ENCODE measurements at regions of chr17 and their contacts with region 1.

Region 1: DNA sequence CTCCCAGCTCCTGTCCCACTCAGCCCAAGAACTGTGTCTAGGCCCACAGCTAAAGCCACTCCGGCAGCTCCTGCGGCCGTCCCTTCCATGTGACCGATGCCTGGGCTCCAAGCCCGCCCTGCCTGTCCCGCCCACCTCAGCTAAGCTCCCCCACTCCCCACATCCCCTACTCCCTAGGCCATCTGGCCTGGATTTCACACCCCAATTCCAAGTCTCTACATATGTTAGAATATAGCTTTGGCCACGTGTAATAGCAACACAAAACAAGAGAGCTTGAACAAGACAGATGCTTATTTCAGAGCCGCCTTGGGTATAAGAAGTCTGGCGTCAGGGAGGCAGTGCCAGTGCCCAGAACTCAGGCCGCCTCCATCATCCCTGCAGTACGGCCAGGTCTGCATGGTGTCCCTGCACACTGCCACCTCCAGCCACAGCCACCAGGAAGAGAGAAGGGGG is 30.0 kb upstream of the USP22 start:
- DNase-seq: no peak
- ATAC-seq: no peak
- H3K4me3 ChIP-seq: no peak overlapping the region
- H3K4me3 Mint-ChIP-seq: no peak overlapping the region
- H3K27ac ChIP-seq: no peak overlapping the region
- H3K27ac Mint-ChIP-seq: no peak overlapping the region
- H3K4me1 ChIP-seq: no peaks in the 10 kb centered on the region
- H3K4me1 Mint-ChIP-seq: no peaks in the 10 kb centered on the region
- H3K27me3 ChIP-seq: peaks cover 0 to 7% of the 10 kb centered on the region in 2 experiments
- H3K27me3 Mint-ChIP-seq: peaks cover 0 to 2% of the 10 kb centered on the region in 2 donors

Region 2: DNA sequence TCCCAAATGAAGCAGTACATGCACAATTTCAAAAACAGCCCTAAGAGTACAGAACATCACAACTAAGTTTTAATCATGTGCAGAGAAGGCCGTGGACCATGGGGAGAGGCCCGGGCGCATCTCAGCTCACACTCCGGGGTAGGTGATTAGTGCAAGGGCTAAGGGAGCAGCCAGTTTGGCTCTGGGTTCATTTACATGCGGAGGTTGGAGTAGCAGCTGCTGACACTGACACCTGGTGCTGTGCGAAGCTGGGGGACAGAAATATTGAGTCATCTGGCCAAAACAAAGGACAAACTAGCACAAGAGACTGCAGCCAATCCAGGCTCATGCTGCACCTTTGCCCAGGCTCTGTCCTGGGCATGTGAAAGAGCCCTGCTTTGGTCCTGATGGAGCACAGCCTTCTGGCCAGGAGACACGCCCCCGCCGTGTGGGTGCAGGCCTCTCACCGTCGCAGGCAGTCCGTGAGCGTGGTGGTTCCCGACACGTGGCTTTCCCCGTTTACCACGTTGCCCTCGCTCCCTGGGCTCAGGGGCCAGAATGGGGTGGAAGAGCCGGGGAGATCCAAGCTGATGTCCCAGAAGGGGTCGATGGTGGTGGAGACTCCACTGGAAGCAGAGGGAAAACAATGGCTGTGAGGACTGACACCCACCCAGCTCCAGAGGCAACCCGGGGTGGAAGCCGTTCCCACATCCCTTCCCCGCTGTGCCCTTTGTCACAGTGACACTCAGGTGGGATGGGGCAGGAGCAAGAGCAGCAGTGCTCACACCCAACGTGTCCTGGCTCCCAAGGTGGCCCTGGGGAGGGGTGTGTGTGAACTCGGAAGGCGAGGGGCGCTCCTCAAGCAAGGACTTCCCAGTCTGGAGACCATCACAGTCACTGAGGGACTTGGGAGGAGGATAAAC is 61.8 kb before region 1 on chr17:
- CTCF ChIA-PET with region 1: no interaction called
- POLR2A ChIA-PET with region 1: interaction called in 1 of 2 experiments, 20 read pairs
- DNase-seq: no peak
- ATAC-seq: no peak
- H3K4me3 ChIP-seq: no peak overlapping the region
- H3K4me3 Mint-ChIP-seq: no peak overlapping the region
- H3K27ac ChIP-seq: no peak overlapping the region
- H3K27ac Mint-ChIP-seq: no peak overlapping the region
- H3K4me1 ChIP-seq: no peaks in the 10 kb centered on the region
- H3K4me1 Mint-ChIP-seq: peaks cover 0 to 5% (median 4%) of the 10 kb centered on the region in 3 donors
- H3K27me3 ChIP-seq: no peaks in the 10 kb centered on the region
- H3K27me3 Mint-ChIP-seq: no peaks in the 10 kb centered on the region

Measured in T-cell (primary cell).